ENCODE measurements at regions of chrX and their contacts with region 1.

Region 1: DNA sequence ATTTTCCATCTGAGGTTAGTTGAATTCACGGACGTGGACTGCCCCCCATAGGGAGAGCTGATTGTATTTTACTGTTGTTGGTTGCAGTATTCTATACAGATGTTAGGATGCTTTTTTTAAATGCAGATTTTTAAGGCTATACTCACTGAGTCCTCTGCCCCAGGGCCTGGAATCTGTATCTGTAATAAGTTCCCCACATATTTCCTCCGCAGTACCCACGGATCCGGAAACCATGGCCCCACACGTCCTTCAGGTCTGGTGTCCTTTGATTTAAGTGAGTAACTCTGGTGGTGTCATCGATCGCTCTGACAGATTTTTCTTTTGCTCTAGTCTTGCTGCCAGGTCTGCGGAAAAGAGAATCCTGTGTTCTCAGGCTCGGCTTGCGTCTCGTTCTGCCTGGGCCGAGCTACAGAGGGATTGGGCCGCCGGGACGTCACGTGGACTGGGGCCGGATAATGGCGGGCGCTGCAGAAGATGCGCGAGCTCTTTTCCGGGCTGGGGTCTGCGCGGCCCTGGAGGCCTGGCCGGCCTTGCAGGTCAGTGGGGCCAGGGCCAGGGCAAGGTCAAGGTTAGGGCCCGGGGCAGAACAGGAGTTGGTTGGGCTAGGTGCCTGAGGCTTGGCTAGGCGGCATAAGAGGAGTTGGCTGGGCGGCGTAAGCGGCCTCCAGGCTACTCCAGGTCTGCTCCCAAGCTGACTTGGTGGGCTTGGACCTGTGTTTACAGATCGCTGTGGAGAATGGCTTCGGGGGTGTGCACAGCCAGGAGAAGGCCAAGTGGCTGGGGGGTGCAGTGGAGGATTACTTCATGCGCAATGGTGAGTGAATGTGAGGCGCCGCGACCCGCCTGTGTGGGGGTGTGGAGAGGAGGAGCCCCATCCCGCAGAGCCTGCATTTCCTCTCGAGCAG is at the start of gene TSR2:
- DNase-seq: peak; percentile 58 to 90 (median 68)
- ATAC-seq: peak; percentile 96
- H3K4me3 ChIP-seq: peak within 1 kb of the TSS; percentile 87
- H3K4me3 Mint-ChIP-seq: peak within 1 kb of the TSS; percentile 95
- H3K27ac ChIP-seq: peak within 1 kb of the TSS; percentile 47 to 56
- H3K27ac Mint-ChIP-seq: peak within 1 kb of the TSS; percentile 85
- H3K4me1 ChIP-seq: peaks cover 25% of the 10 kb centered on the region
- H3K4me1 Mint-ChIP-seq: peaks cover 32% of the 10 kb centered on the region
- H3K27me3 ChIP-seq: no peaks in the 10 kb centered on the region
- H3K27me3 Mint-ChIP-seq: no peaks in the 10 kb centered on the region
- CTCF ChIP-seq: no peak
- total RNA-seq, gene TSR2: 36.3 to 36.5 TPM

Region 2: DNA sequence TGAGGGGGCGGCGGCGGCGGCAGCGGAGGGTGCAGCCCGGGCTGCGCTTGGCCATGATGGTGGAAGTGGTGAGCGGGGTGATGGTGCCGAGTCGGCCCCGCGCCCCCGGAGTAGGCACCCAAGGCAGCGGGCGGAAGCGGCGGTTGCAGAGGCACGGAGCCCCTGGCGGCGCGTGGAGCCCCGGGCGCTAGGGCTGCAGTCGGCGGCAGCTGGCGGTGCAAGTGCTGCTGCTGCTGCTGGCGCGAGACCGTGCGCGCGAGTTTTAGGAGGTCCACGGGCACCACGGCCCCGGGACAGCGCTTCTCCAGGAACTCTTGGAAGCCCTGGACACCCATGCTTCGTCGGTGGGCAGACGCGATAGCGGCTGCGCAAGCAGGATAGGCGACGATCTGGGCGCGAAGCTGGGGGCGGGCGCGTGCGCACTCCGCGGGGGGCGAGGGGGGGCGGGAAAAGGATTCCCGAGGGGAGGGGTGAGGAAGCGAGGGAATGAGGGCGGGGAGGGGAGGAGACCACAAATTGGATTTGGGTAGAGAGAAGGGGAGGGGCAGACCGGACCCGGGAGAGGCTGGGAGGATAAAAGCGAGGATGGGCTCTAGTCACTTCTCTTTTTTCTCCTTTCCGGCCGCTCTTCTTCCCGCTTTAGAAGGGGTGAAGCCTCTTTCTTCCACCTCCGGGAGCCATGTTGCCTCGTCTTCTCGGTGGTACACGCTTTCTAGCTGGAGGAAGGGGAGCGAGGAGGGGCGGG is 257.2 kb before region 1 on chrX and contains the start of gene FAM120C:
- CTCF ChIA-PET with region 1: no interaction called
- POLR2A ChIA-PET with region 1: interaction called, 12 read pairs
- intact Hi-C with region 1: loop called in 1 of 2 experiments (anchors 2 kb)
- DNase-seq: peak; percentile 41 to 82 (median 56)
- ATAC-seq: peak; percentile 69
- H3K4me3 ChIP-seq: peak within 1 kb of the TSS; percentile 67
- H3K4me3 Mint-ChIP-seq: peak within 1 kb of the TSS; percentile 92
- H3K27ac ChIP-seq: peak within 1 kb of the TSS; percentile 69 to 75
- H3K27ac Mint-ChIP-seq: peak within 1 kb of the TSS; percentile 86
- H3K4me1 ChIP-seq: peaks cover 29% of the 10 kb centered on the region
- H3K4me1 Mint-ChIP-seq: peaks cover 42% of the 10 kb centered on the region
- H3K27me3 ChIP-seq: no peaks in the 10 kb centered on the region
- H3K27me3 Mint-ChIP-seq: no peaks in the 10 kb centered on the region
- CTCF ChIP-seq: no peak
- total RNA-seq, gene FAM120C: 12.3 to 13.3 TPM

Region 3: GRCh38 chrX:54357414-54358377 is 82.5 kb before region 1 on chrX and contains the start of gene WNK3:
- CTCF ChIA-PET with region 1: no interaction called
- POLR2A ChIA-PET with region 1: interaction called, 3 read pairs
- intact Hi-C with region 1: loop called in 1 of 2 experiments (anchors 5 kb)
- DNase-seq: peak; percentile 2 to 64 (median 28)
- ATAC-seq: peak; percentile 62
- H3K4me3 ChIP-seq: peak within 1 kb of the TSS; percentile 50
- H3K4me3 Mint-ChIP-seq: peak within 1 kb of the TSS; percentile 88
- H3K27ac ChIP-seq: no peak within 1 kb of the TSS
- H3K27ac Mint-ChIP-seq: peak within 1 kb of the TSS; percentile 10
- H3K4me1 ChIP-seq: peaks cover 20% of the 10 kb centered on the region
- H3K4me1 Mint-ChIP-seq: peaks cover 21% of the 10 kb centered on the region
- H3K27me3 ChIP-seq: peaks cover 4 to 13% of the 10 kb centered on the region in 2 experiments
- H3K27me3 Mint-ChIP-seq: peaks cover 40% of the 10 kb centered on the region
- CTCF ChIP-seq: no peak
- total RNA-seq, gene WNK3: 0.16 to 0.25 TPM

Region 4: DNA sequence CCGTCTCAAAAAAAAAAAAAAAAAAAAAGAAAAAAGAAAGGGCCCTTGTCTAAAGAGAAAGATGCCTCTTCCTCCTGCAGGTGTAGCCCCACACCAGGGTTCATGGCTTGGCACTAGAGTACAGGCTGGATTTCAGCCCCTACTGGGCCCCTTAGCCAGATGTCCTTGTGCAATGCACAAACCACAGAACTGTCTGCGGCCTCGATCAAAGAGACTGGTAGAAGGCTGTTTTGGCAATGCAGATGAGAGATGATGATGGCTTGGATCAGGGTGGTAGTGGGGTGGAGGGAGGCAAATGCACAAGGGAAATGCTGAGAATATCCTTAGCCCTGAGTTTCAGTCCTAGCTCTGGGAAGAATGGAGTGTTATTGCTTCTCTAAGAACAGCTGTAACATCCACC is 26.5 kb before region 1 on chrX:
- CTCF ChIA-PET with region 1: no interaction called
- POLR2A ChIA-PET with region 1: no interaction called
- intact Hi-C with region 1: loop called in 1 of 2 experiments (anchors 1 kb)
- DNase-seq: peak in 1 of 14 experiments; percentile 21
- ATAC-seq: no peak
- H3K4me3 ChIP-seq: no peak overlapping the region
- H3K4me3 Mint-ChIP-seq: no peak overlapping the region
- H3K27ac ChIP-seq: no peak overlapping the region
- H3K27ac Mint-ChIP-seq: no peak overlapping the region
- H3K4me1 ChIP-seq: peaks cover 6% of the 10 kb centered on the region
- H3K4me1 Mint-ChIP-seq: peaks cover 7% of the 10 kb centered on the region
- H3K27me3 ChIP-seq: peaks cover 0 to 3% of the 10 kb centered on the region in 2 experiments
- H3K27me3 Mint-ChIP-seq: peaks cover 26% of the 10 kb centered on the region
- CTCF ChIP-seq: no peak

Region 5: DNA sequence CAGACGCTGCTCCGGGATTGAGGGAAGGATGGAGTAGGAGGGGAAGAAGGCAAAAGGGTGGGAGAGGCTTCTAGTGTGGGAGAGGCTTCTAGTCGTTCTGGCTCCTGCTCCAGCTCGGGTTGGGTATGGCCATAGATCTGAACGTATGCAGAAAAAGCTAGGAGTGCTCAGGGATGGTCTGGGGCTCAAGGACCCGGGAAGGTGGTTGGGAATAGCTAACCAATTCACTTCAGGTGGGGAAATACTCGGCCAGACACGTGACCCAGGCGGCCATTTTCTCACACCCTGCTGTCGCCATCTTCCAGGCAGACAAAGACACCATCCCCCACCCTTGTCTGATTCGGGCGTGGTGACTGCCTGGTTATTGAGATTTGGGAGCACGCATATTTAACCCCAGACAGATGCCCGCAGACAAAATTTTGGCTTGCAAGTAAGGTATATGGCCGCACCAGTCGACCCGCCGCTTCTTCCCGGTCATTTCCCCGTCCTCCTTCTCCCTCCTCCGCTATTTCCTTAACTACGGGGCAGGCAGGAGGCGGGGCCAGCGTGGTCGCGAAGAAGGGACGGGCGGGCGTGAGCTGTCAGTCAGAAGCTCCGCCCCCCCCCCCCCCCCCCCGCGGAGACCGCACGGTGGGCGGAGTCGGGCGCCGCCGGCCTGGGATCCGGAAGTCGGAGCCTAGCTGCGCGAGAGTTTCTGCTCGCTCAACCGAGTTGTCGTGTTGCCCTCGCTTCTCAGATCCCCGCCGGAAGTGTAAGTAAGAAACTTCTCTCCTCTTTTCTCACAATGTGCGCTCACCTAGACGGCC is 89.5 kb after region 1 on chrX and contains the start of gene GNL3L:
- CTCF ChIA-PET with region 1: no interaction called
- POLR2A ChIA-PET with region 1: interaction called, 15 read pairs
- intact Hi-C with region 1: loop called in 1 of 2 experiments (anchors 2 kb)
- DNase-seq: peak; percentile 56 to 90 (median 79)
- ATAC-seq: peak; percentile 84
- H3K4me3 ChIP-seq: peak within 1 kb of the TSS; percentile 76
- H3K4me3 Mint-ChIP-seq: peak within 1 kb of the TSS; percentile 99
- H3K27ac ChIP-seq: peak within 1 kb of the TSS; percentile 64 to 90
- H3K27ac Mint-ChIP-seq: peak within 1 kb of the TSS; percentile 94
- H3K4me1 ChIP-seq: peaks cover 38% of the 10 kb centered on the region
- H3K4me1 Mint-ChIP-seq: peaks cover 44% of the 10 kb centered on the region
- H3K27me3 ChIP-seq: no peaks in the 10 kb centered on the region
- H3K27me3 Mint-ChIP-seq: no peaks in the 10 kb centered on the region
- CTCF ChIP-seq: no peak
- total RNA-seq, gene GNL3L: 21.5 to 22.8 TPM

Region 6: DNA sequence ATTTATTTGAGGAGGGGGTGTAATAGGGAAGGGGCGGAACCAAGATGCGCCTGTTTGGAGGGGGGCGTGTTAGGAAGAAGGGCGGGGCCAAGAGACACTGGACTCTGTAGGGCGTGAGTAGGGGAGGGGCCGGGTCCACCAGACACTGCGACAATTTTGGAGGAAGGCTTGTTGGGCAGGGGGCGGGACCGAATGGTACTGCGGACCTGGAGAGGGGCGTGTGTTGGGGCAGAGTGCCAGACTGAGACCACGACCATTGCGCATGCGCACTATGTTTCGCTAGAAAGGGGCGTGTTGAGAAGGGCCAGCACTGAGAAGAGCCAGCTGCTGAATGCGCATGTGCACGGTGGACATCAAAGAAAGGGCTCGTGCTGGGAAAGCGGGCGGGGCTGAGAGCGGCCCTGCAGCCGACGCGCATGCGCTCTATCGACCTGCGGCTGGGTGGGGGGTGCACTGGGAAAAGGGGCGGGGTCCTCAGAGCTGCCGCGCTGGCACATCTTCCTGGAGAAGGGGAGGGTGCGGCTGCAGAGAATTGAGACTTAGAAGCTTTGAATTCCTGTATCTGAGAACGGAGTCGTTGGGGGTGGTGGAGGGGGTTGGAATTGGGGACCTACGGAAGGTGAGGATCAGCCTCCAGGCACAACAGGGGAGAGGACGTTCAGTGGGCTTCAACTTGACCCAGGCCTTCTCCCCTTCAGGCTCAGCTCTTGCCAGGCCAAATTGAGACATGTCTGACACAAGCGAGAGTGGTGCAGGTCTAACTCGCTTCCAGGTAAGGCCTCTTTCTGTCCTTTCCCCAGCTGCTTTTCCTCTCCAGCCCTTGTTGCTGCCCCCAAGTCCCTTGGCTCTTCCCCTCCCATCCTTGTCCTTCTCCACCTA is 368.6 kb after region 1 on chrX:
- CTCF ChIA-PET with region 1: no interaction called
- POLR2A ChIA-PET with region 1: interaction called, 5 read pairs
- intact Hi-C with region 1: loop called (anchors 5 to 10 kb)
- DNase-seq: peak; percentile 75 to 97 (median 84)
- ATAC-seq: peak; percentile 70
- H3K4me3 ChIP-seq: peak overlapping the region; percentile 93
- H3K4me3 Mint-ChIP-seq: peak overlapping the region; percentile 95
- H3K27ac ChIP-seq: peak overlapping the region; percentile 65 to 88
- H3K27ac Mint-ChIP-seq: peak overlapping the region; percentile 98
- H3K4me1 ChIP-seq: peaks cover 25% of the 10 kb centered on the region
- H3K4me1 Mint-ChIP-seq: peaks cover 24% of the 10 kb centered on the region
- H3K27me3 ChIP-seq: no peaks in the 10 kb centered on the region
- H3K27me3 Mint-ChIP-seq: no peaks in the 10 kb centered on the region
- CTCF ChIP-seq: no peak

Region 7: DNA sequence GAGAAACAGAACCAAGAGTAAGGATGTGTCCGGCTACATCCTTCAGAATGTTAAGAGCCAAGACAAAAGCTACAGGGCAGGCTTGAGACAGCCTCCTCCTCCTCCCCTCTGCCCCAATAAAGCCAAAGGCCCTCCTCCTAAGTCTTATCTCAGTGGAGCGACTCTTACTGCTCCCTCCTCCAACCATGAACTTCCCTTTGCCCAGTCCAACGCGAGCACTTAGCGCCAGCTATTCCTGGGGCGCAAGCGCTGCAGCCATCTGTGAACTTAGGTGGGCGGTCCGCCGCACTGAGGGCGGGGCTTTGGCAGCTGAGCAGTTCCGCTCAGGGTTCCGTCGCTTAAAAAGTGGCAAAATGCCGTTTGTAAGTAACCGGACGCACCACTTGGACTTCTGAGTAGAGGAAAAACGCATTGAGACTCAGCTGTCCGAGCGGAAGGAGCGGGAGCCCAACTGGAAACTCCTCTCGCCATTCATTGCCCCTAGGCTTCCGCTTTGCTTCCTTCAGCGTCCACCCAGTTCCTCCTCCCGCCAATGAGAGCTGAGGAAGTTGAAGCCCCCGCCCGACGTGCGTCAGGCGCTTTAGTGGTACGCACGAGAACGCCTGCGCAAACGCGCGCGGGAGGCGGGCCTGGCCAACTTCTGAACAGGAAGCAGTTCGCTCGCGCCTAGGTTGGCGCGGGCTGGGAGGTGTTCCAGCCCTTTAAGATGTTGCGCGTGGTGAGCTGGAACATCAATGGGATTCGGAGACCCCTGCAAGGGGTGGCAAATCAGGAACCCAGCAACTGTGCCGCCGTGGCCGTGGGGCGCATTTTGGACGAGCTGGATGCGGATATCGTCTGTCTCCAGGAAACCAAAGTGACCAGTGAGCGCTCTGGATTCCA is 559.7 kb after region 1 on chrX and contains the start of gene APEX2:
- CTCF ChIA-PET with region 1: no interaction called
- POLR2A ChIA-PET with region 1: interaction called, 3 read pairs
- intact Hi-C with region 1: loop called in 1 of 2 experiments (anchors 10 kb)
- DNase-seq: peak; percentile 72 to 95 (median 84)
- ATAC-seq: peak; percentile 94
- H3K4me3 ChIP-seq: peak within 1 kb of the TSS; percentile 89
- H3K4me3 Mint-ChIP-seq: peak within 1 kb of the TSS; percentile 96
- H3K27ac ChIP-seq: peak within 1 kb of the TSS; percentile 84 to 97
- H3K27ac Mint-ChIP-seq: peak within 1 kb of the TSS; percentile 97
- H3K4me1 ChIP-seq: peaks cover 20% of the 10 kb centered on the region
- H3K4me1 Mint-ChIP-seq: peaks cover 36% of the 10 kb centered on the region
- H3K27me3 ChIP-seq: no peaks in the 10 kb centered on the region
- H3K27me3 Mint-ChIP-seq: no peaks in the 10 kb centered on the region
- CTCF ChIP-seq: no peak
- total RNA-seq, gene APEX2: 6.4 to 7.2 TPM